Activated naive CD4-positive, alpha-beta T cell treated with anti-CD3 and anti-CD28 coated beads for 36 hours (primary cell): ENCODE measurements at regions of chr6 and their contacts with region 1.

Region 1: DNA sequence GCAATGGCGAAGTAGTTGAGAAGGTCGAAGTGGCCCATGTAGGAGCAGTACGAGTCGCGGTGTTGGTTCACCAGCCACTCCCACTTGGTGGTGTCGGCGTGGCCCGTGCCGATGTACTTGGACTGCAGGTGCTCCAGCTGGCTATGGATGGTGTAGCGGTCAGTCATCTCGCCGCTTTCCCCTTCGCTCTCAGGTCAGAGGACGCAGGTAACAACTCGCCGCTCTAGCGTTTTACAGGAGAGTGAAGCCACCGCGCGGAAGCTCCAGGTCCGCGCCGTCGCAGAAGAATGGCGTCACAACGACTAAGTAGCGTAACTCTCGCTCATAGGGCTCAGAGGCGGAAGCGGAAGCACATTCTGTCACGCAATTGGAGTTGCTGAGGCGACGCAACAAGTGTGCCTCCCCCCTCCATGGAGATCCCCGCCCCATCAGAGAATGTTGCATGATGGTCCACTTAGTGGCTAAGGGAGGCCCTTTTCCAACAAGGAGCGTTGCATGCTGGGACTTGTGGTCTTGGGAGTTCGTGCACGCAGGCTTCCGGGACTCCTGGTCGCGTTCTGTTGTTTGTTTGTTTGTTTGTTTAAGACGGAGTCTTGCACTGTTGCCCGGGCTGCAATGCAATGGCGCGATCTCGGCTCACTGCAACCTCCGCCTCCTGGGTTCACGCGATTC is at the start of gene SF3B5:
- DNase-seq: peak; percentile 99
- H3K4me3 Mint-ChIP-seq: peak within 1 kb of the TSS; percentile 91
- H3K27ac Mint-ChIP-seq: peak within 1 kb of the TSS; percentile 91
- H3K4me1 Mint-ChIP-seq: peaks cover 29% of the 10 kb centered on the region
- H3K27me3 Mint-ChIP-seq: no peaks in the 10 kb centered on the region
- total RNA-seq, gene SF3B5: 170 to 176 TPM

Region 2: GRCh38 chr6:142146828-142147662 is 1948.4 kb before region 1 on chr6 and contains the starts of genes NMBR and VTA1:
- CTCF ChIA-PET with region 1: no interaction called
- intact Hi-C with region 1: loop called (anchors 1 kb)
- DNase-seq: peak; percentile 98
- H3K4me3 Mint-ChIP-seq: peak within 1 kb of the TSS; percentile 93
- H3K27ac Mint-ChIP-seq: peak within 1 kb of the TSS; percentile 91
- H3K4me1 Mint-ChIP-seq: peaks cover 53% of the 10 kb centered on the region
- H3K27me3 Mint-ChIP-seq: no peaks in the 10 kb centered on the region
- total RNA-seq, gene NMBR: not detected
- total RNA-seq, gene VTA1: 54.7 to 57.3 TPM

Region 3: GRCh38 chr6:143842902-143843676 is 252.4 kb before region 1 on chr6 and contains the start of gene LTV1:
- CTCF ChIA-PET with region 1: no interaction called
- intact Hi-C with region 1: loop called (anchors 1 kb)
- DNase-seq: peak; percentile 96
- H3K4me3 Mint-ChIP-seq: peak within 1 kb of the TSS; percentile 93
- H3K27ac Mint-ChIP-seq: peak within 1 kb of the TSS; percentile 94
- H3K4me1 Mint-ChIP-seq: peaks cover 28% of the 10 kb centered on the region
- H3K27me3 Mint-ChIP-seq: no peaks in the 10 kb centered on the region
- total RNA-seq, gene LTV1: 22.8 to 23.3 TPM

Region 4: DNA sequence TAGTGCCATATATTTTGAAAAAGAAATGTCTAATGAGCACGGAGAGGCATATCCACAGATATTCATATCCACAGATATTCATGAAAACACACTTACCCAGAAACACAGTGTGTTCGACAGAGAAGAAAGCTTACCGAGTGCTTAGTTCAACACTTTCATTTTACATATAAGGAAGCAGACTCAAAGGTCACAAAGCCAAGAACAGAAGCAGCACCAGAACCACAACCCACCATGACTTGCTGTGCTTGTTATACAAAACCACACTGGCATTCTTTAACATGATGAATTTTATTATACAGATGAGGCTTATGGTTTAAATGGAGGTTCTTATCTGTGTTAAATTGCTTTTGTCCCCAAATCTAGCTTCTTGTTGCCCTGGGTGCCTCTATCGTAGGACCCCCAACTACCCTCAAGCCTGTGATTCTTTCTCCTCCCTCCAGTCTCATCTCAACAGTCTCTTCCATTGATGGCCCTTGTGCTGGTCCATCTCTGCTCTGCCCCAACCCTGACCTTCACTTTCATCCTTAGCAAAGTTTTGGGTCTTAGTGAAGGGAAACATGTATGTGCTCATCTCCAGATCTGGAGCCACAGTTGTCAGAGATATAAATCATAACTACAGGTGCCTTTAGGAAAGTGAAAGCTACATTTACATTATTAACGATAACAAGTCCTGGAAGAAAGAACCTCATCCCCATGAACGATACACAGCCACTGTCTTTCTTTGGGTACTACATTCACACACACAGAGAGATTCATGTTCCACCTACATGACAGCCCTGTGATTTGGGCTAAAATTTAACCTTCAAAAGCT is 40.1 kb before region 1 on chr6:
- CTCF ChIA-PET with region 1: no interaction called
- intact Hi-C with region 1: loop called (anchors 1 kb)
- DNase-seq: peak; percentile 70
- H3K4me3 Mint-ChIP-seq: peak overlapping the region; percentile 76
- H3K27ac Mint-ChIP-seq: peak overlapping the region; percentile 91
- H3K4me1 Mint-ChIP-seq: peaks cover 26% of the 10 kb centered on the region
- H3K27me3 Mint-ChIP-seq: no peaks in the 10 kb centered on the region

Region 5: GRCh38 chr6:144149891-144150709 is 54.6 kb after region 1 on chr6 and contains the start of gene STX11:
- CTCF ChIA-PET with region 1: no interaction called
- intact Hi-C with region 1: loop called (anchors 1 kb)
- DNase-seq: peak; percentile 91
- H3K4me3 Mint-ChIP-seq: peak within 1 kb of the TSS; percentile 81
- H3K27ac Mint-ChIP-seq: peak within 1 kb of the TSS; percentile 93
- H3K4me1 Mint-ChIP-seq: peaks cover 40% of the 10 kb centered on the region
- H3K27me3 Mint-ChIP-seq: no peaks in the 10 kb centered on the region
- total RNA-seq, gene STX11: 17.2 to 17.5 TPM

Region 6: DNA sequence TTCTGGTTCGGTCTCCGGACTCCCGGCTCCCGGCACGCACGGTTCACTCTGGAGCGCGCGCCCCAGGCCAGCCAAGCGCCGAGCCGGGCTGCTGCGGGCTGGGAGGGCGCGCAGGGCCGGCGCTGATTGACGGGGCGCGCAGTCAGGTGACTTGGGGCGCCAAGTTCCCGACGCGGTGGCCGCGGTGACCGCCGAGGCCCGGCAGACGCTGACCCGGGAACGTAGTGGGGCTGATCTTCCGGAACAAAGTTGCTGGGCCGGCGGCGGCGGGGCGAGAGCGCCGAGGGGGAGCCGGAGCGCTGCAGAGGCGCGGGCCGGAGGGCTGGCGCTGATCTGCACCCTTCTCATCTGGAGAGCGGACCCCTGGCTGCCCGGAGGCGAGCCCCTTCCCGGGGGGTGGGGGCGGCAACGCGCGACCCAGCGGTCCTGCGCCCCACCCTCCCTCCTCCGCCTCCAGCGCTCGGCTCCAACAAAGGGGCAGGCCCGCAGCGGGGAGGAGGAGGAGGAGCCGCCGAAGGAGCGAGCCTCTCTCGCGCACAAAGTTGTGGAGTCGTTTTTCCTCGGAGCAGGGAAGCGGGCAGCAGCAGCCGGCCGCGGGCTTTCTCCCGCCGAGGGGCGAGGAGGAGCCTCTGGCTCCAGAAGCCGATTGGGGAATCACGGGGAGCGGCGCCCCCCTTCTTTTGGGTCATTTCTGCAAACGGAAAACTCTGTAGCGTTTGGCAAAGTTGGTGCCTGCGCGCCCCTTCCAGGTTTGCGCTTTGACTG is 189.5 kb after region 1 on chr6 and contains the start of gene UTRN:
- CTCF ChIA-PET with region 1: interaction called, 3 read pairs
- intact Hi-C with region 1: loop called (anchors 1 kb)
- DNase-seq: peak; percentile 64
- H3K4me3 Mint-ChIP-seq: peak within 1 kb of the TSS; percentile 86
- H3K27ac Mint-ChIP-seq: no peak within 1 kb of the TSS
- H3K4me1 Mint-ChIP-seq: peaks cover 12% of the 10 kb centered on the region
- H3K27me3 Mint-ChIP-seq: peaks cover 21% of the 10 kb centered on the region
- total RNA-seq, gene UTRN: 35.3 to 39.9 TPM